ENCODE measurements at regions of chr19 and their contacts with region 1.

Region 1: GRCh38 chr19:50159078-50159477 is 4.0 kb downstream of the IZUMO2 start:
- DNase-seq: no peak
- H3K27ac ChIP-seq: no peak overlapping the region
- CTCF ChIP-seq: no peak

Region 2: GRCh38 chr19:50147462-50148423 is 11.3 kb before region 1 on chr19:
- CTCF ChIA-PET with region 1: interaction called, 11 read pairs
- POLR2A ChIA-PET with region 1: no interaction called
- DNase-seq: peak; percentile 78
- H3K27ac ChIP-seq: peak overlapping the region; percentile 68
- CTCF ChIP-seq: peak; percentile 56

Region 3: DNA sequence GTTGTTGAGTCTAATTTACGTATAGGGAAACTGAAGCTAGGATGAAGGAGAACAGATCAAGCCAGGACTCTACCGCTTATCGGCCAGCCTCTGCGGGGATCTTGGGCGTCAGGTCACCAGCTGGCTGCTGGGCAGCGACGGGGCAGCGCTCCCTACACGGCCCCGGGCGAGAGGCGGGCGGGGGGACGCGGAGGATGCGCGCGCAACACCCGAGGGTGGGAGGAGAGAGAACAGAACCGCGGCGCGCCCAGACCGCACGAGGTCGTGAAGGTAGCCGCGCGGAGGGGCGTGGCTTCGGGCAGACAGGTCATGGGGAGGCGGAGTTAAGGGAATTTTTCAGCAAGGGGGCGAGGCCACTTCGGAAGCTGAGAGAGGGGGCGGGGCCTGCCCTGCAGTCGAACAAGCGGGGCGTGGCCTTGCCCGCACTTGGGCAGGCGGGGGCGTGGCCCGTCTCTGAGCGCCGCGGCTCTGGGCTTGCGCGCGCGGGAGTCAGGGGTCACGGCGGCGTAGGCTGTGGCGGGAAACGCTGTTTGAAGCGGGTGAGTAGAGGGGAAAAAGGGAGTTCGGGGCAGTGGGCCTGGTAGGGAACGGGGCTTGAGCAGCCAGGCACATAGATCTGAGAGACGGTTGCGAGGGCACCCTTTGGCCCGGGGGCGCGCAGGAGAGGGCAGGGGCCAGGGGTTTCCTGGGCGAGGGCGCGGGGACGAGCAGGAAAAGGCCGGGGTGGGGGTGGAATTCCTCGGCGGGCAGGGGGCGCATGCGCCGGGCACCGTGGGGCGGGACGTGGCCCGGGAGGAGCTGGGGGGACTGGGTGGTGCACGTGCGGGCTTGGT is 225.0 kb after region 1 on chr19 and contains the start of gene POLD1:
- CTCF ChIA-PET with region 1: no interaction called
- POLR2A ChIA-PET with region 1: no interaction called
- DNase-seq: peak; percentile 98
- H3K27ac ChIP-seq: peak within 1 kb of the TSS; percentile 83
- CTCF ChIP-seq: no peak

Measured in RWPE1 (cell line).